Endothelial cell of umbilical vein (primary cell): ENCODE measurements at regions of chr1 and their contacts with region 1.

Region 1: GRCh38 chr1:58816072-58816746 is 32.4 kb upstream of the JUN start:
- DNase-seq: peak; percentile 91
- H3K4me3 ChIP-seq: peak overlapping the region; percentile 34 to 68 (median 54)
- H3K27ac ChIP-seq: peak overlapping the region; percentile 100
- H3K4me1 ChIP-seq: peaks cover 72% of the 10 kb centered on the region
- H3K27me3 ChIP-seq: no peaks in the 10 kb centered on the region
- CTCF ChIP-seq: peak in 1 of 2 donors; percentile 14
- POLR2A ChIP-seq: peak; percentile 63

Region 2: GRCh38 chr1:58755468-58755872 is 60.7 kb before region 1 on chr1:
- CTCF ChIA-PET with region 1: no interaction called
- POLR2A ChIA-PET with region 1: no interaction called
- dilution Hi-C with region 1: no loop called
- intact Hi-C with region 1: loop called (anchors 2 kb)
- DNase-seq: peak; percentile 99
- H3K4me3 ChIP-seq: peak overlapping the region in 1 of 3 experiments; percentile 18
- H3K27ac ChIP-seq: peak overlapping the region; percentile 96
- H3K4me1 ChIP-seq: peaks cover 40% of the 10 kb centered on the region
- H3K27me3 ChIP-seq: no peaks in the 10 kb centered on the region
- CTCF ChIP-seq: no peak
- POLR2A ChIP-seq: no peak

Region 3: DNA sequence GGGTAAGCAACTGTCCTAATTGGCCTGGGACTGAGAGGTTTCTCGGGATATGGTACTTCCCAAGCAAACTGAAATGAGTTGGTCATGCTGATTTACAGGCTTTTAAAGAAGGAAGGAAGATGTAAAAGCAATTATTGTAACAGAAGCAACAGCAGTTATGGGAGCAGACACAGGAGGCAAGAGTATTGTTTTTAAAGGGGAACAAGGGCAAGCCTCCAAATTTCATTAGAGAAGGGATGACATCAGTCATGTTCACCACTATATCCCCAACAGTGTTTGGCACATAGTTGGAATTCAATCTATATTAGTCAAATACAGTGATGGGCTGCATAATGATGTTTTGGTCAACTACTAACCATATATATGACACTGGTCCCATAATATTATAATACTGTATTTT is 13.7 kb after region 1 on chr1:
- CTCF ChIA-PET with region 1: no interaction called
- POLR2A ChIA-PET with region 1: no interaction called
- dilution Hi-C with region 1: no loop called
- intact Hi-C with region 1: no loop called
- DNase-seq: no peak
- H3K4me3 ChIP-seq: no peak overlapping the region
- H3K27ac ChIP-seq: no peak overlapping the region
- H3K4me1 ChIP-seq: peaks cover 2% of the 10 kb centered on the region
- H3K27me3 ChIP-seq: no peaks in the 10 kb centered on the region
- CTCF ChIP-seq: no peak
- POLR2A ChIP-seq: no peak

Region 4: GRCh38 chr1:58857680-58858673 is 41.8 kb after region 1 on chr1:
- CTCF ChIA-PET with region 1: interaction called, 8 read pairs
- POLR2A ChIA-PET with region 1: no interaction called
- dilution Hi-C with region 1: no loop called
- intact Hi-C with region 1: loop called (anchors 1 kb)
- DNase-seq: no peak
- H3K4me3 ChIP-seq: no peak overlapping the region
- H3K27ac ChIP-seq: no peak overlapping the region
- H3K4me1 ChIP-seq: peaks cover 23% of the 10 kb centered on the region
- H3K27me3 ChIP-seq: no peaks in the 10 kb centered on the region
- CTCF ChIP-seq: no peak
- POLR2A ChIP-seq: no peak

Region 5: DNA sequence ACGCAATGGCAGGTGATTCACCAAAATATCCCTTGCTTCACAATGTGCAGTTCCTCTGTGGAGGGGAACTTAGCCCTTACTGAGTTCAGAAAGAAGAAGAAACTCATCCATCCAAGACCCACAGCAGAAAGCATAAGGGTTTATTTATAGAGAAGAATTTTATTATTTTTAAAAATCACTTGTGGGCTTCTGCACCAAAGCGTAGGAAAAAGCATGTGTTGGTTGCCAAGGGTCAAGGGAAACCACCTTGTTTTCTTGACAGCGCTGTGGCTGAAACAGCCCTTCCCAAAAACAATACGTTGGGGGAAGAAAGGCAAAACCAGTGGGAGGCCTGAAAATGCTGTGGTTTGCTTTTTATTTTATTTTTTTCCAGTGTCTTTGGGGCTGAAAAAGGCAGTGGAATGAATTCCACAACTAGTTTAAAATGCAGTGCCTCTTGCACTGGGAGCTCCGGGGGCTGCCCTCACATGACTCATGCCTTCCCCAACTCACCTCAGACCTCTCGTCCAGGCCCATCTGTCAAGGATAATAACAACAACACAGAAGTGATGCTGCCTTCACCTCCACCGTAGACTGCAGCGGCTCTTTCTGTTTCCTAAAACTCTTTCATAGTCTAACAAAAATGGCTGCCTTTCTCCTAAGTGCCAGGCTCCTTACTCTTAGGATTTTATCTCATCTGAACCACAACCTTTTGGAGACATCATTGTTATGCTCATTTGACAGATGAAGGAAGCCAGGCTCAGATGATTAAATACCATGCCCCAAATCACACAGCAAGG is 191.8 kb after region 1 on chr1:
- CTCF ChIA-PET with region 1: no interaction called
- POLR2A ChIA-PET with region 1: no interaction called
- dilution Hi-C with region 1: no loop called
- intact Hi-C with region 1: no loop called
- DNase-seq: peak; percentile 76
- H3K4me3 ChIP-seq: no peak overlapping the region
- H3K27ac ChIP-seq: no peak overlapping the region
- H3K4me1 ChIP-seq: peaks cover 3% of the 10 kb centered on the region
- H3K27me3 ChIP-seq: no peaks in the 10 kb centered on the region
- CTCF ChIP-seq: no peak
- POLR2A ChIP-seq: no peak

Region 6: DNA sequence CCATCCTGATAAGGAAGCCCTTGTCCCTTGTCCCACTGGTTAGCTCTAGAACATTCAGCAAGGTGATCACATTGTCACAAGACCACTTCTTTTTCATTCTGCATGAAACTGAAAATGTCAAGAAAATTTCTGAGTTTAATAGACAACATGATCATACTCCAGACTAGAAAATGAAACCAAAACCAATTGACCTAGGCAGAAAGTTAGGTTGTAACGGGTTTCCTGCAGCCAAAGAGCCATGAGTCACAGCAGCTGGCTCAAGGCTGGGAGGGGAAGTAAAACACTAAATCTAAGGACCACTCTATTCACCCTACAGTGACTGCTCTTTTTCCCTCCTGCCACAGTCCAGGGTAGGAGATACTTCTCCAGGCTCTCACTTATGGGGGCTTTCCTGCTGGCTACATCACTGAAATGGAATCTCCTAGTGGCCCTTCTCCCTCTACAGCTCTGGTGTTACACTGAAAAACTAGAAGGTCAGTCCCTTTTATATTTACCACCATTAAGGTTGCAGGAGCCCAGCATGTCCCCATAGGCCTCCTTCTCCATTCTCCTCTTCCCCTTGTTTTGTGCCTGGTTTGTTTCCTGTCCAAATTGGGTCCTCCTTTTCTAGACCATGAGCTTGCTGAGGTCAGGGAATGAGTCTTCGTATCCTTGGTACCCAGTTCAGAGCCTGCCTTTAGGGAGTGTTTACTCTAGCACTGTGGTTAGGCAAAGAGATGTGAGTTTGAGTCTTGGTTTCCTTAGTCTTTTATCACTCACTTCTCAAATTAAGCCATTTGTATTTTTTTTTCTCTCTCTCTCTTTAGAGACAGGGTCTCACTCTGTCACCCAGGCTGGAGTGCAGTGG is 204.2 kb after region 1 on chr1:
- CTCF ChIA-PET with region 1: no interaction called
- POLR2A ChIA-PET with region 1: no interaction called
- dilution Hi-C with region 1: no loop called
- intact Hi-C with region 1: loop called (anchors 2 kb)
- DNase-seq: peak; percentile 87
- H3K4me3 ChIP-seq: peak overlapping the region in 1 of 3 experiments; percentile 56
- H3K27ac ChIP-seq: peak overlapping the region; percentile 65
- H3K4me1 ChIP-seq: peaks cover 31% of the 10 kb centered on the region
- H3K27me3 ChIP-seq: no peaks in the 10 kb centered on the region
- CTCF ChIP-seq: no peak
- POLR2A ChIP-seq: no peak

Region 7: DNA sequence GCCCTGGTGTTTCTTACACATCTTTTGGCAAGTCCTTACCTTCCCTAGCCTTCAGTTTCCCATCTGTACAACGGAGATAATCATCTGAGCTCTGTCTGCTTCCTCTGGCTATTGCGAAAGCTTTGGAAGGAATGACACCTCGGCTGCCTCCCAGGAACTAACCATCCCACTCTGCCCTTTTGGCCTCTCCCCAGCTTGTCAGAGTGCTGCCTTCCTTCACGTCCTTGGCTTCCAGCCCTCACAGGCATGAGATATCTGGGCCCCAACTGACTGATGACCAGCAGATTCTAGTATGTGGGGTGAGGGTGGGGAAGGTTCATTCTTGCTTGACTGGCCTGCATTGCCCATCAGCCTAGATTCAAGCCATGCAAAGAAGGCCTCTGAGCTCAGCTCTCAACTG is 227.6 kb after region 1 on chr1:
- CTCF ChIA-PET with region 1: no interaction called
- POLR2A ChIA-PET with region 1: no interaction called
- dilution Hi-C with region 1: no loop called
- intact Hi-C with region 1: no loop called
- DNase-seq: no peak
- H3K4me3 ChIP-seq: no peak overlapping the region
- H3K27ac ChIP-seq: no peak overlapping the region
- H3K4me1 ChIP-seq: no peaks in the 10 kb centered on the region
- H3K27me3 ChIP-seq: no peaks in the 10 kb centered on the region
- CTCF ChIP-seq: no peak
- POLR2A ChIP-seq: no peak

Region 8: GRCh38 chr1:59128784-59129227 is 312.6 kb after region 1 on chr1:
- CTCF ChIA-PET with region 1: no interaction called
- POLR2A ChIA-PET with region 1: no interaction called
- dilution Hi-C with region 1: no loop called
- intact Hi-C with region 1: loop called (anchors 5 kb)
- DNase-seq: peak; percentile 77
- H3K4me3 ChIP-seq: no peak overlapping the region
- H3K27ac ChIP-seq: peak overlapping the region; percentile 87
- H3K4me1 ChIP-seq: peaks cover 32% of the 10 kb centered on the region
- H3K27me3 ChIP-seq: no peaks in the 10 kb centered on the region
- CTCF ChIP-seq: no peak
- POLR2A ChIP-seq: peak; percentile 33

Region 9: GRCh38 chr1:59699227-59699847 is 883.1 kb after region 1 on chr1:
- CTCF ChIA-PET with region 1: interaction called, 4 read pairs
- POLR2A ChIA-PET with region 1: no interaction called
- dilution Hi-C with region 1: no loop called
- intact Hi-C with region 1: loop called (anchors 1 kb)
- DNase-seq: peak; percentile 62
- H3K4me3 ChIP-seq: no peak overlapping the region
- H3K27ac ChIP-seq: no peak overlapping the region
- H3K4me1 ChIP-seq: peaks cover 4% of the 10 kb centered on the region
- H3K27me3 ChIP-seq: no peaks in the 10 kb centered on the region
- CTCF ChIP-seq: peak; percentile 72 to 78
- POLR2A ChIP-seq: no peak